ENCODE measurements at regions of chr2 and their contacts with region 1.

Region 1: GRCh38 chr2:113080134-113080533 is 12.4 kb downstream of the IL1F10 start:
- DNase-seq: peak; percentile 67
- H3K4me3 Mint-ChIP-seq: no peak overlapping the region
- H3K27ac Mint-ChIP-seq: no peak overlapping the region
- H3K4me1 Mint-ChIP-seq: peaks cover 1% of the 10 kb centered on the region
- H3K27me3 Mint-ChIP-seq: peaks cover 40% of the 10 kb centered on the region

Region 2: GRCh38 chr2:112985090-112985489 is 95.0 kb before region 1 on chr2:
- CTCF ChIA-PET with region 1: interaction called, 12 read pairs
- DNase-seq: peak; percentile 63
- H3K4me3 Mint-ChIP-seq: no peak overlapping the region
- H3K27ac Mint-ChIP-seq: peak overlapping the region; percentile 57
- H3K4me1 Mint-ChIP-seq: peaks cover 26% of the 10 kb centered on the region
- H3K27me3 Mint-ChIP-seq: peaks cover 3% of the 10 kb centered on the region

Region 3: DNA sequence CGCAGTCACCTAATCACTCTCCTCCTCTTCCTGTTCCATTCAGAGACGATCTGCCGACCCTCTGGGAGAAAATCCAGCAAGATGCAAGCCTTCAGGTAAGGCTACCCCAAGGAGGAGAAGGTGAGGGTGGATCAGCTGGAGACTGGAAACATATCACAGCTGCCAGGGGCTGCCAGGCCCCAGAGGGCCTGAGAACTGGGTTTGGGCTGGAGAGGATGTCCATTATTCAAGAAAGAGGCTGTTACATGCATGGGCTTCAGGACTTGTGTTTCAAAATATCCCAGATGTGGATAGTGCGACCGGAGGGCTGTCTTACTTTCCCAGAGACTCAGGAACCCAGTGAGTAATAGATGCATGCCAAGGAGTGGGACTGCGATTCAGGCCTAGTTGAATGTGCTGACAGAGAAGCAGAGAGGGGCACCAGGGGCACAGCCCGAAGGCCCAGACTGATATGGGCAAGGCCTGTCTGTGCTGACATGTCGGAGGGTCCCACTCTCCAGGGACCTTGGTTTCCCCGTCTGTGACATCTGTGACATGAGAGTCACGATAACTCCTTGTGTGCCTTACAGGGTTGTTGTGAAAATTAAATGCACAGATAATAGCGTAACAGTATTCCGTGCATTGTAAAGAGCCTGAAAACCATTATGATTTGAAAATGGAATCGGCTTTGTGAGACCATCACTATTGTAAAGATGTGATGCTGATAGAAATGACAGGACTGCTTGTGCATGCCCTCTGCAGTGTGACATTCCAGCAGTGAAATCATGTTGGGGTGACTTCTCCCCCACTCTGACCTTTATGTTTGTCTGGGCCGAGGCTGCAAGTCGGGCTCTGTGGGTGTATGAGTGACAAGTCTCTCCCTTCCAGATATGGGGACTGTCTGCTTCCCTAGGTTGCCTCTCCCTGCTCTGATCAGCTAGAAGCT is 47.8 kb after region 1 on chr2:
- CTCF ChIA-PET with region 1: interaction called, 226 read pairs
- DNase-seq: no peak
- H3K4me3 Mint-ChIP-seq: no peak overlapping the region
- H3K27ac Mint-ChIP-seq: no peak overlapping the region
- H3K4me1 Mint-ChIP-seq: peaks cover 14% of the 10 kb centered on the region
- H3K27me3 Mint-ChIP-seq: peaks cover 31% of the 10 kb centered on the region

Region 4: DNA sequence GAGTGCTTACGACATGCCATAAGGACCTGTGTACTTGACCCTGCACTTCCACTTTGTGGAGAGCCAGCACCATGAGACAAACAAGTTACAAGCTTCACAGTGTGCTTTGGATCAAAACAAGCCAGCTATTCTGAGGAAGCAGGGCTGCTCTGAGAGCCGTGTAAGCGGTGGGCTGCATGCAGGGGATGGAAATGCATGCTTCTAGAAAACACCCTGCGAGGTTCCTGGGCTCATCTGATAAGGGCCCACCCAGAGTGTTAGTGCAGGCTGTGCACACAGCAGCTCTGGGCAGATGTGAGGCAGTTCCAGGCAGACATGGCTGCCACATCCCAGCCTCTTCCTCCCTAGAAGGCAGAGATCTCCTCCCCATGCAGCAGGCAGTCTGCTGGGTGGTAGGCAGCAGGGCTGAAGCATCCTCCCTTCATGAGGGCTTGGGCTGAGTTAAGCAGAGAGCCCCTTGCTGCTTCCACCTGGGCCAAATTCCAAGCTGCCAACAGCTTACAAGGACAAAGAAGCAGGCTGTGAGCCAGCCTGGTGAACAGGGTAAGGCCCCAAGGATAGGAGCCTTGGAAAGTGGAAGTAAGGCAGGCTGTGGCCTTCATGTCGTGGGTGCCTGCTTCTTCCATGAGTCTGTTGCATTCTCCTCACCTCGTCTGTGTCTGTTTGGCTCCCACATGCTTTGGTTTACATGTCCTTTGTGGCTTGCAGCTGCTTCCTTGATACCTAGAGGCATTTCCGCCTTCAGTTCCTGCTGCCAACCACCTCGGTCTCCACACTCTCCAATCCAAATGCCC is 101.3 kb after region 1 on chr2:
- CTCF ChIA-PET with region 1: interaction called, 15 read pairs
- DNase-seq: peak; percentile 49
- H3K4me3 Mint-ChIP-seq: peak overlapping the region; percentile 86
- H3K27ac Mint-ChIP-seq: peak overlapping the region; percentile 88
- H3K4me1 Mint-ChIP-seq: peaks cover 91% of the 10 kb centered on the region
- H3K27me3 Mint-ChIP-seq: no peaks in the 10 kb centered on the region

Region 5: GRCh38 chr2:113390124-113390849 is 310.2 kb after region 1 on chr2:
- CTCF ChIA-PET with region 1: interaction called, 12 read pairs
- DNase-seq: peak; percentile 63
- H3K4me3 Mint-ChIP-seq: peak overlapping the region; percentile 53
- H3K27ac Mint-ChIP-seq: peak overlapping the region; percentile 78
- H3K4me1 Mint-ChIP-seq: peaks cover 15% of the 10 kb centered on the region
- H3K27me3 Mint-ChIP-seq: peaks cover 23% of the 10 kb centered on the region